ENCODE measurements at regions of chr2 and their contacts with region 1.

Region 1: GRCh38 chr2:121649596-121650314 is 493 bp upstream of the CLASP1 start:
- DNase-seq: peak; percentile 96
- H3K4me3 ChIP-seq: peak overlapping the region; percentile 42 to 80 (median 67)
- H3K27ac ChIP-seq: peak overlapping the region; percentile 86
- H3K4me1 ChIP-seq: peaks cover 16% of the 10 kb centered on the region
- H3K27me3 ChIP-seq: no peaks in the 10 kb centered on the region
- CTCF ChIP-seq: no peak

Region 2: GRCh38 chr2:121579309-121579708 is 70.4 kb before region 1 on chr2:
- CTCF ChIA-PET with region 1: no interaction called
- dilution Hi-C with region 1: loop called (anchors 5 kb)
- in situ Hi-C with region 1: no loop called
- intact Hi-C with region 1: no loop called
- DNase-seq: no peak
- H3K4me3 ChIP-seq: no peak overlapping the region
- H3K27ac ChIP-seq: no peak overlapping the region
- H3K4me1 ChIP-seq: no peaks in the 10 kb centered on the region
- H3K27me3 ChIP-seq: no peaks in the 10 kb centered on the region
- CTCF ChIP-seq: no peak

Region 3: DNA sequence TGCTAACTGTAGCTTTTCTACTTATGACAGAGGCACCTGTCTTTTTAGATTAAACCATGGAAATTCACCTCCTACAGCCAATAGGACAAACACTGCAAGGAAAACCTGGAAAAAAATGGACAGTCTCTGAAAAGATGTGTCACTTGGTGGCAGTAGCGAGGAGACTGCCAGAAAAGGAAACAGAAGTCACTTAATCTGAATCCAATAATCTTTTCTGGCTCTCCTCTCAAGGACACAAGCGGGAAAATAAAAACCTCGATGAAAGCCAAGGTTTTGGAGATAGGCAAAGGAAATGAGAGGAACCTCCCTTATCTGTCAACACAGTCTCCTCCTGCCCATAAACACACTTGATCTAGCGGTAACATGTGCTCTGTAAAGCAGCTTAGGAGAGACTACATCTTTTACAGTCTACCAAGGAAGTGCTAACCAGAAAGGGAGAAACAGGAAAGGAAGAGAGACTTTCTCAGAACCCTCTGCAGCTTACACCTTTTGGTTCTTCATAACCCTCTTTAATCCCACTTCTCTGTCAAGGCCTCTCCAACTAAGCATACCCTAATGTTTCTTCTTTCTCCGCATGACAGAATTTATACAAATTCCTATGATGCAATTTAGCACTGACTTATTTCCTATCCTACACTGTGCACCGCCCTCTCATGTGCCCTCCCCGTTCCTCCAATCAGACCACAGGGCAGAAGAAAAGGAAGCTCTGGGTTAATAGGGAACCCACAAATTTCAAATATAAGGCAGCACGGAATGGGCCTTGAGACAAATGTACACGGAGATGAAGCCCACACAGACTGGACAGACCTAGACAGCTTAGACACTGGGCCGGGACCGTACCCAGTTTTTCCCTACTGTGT is 53.3 kb before region 1 on chr2:
- CTCF ChIA-PET with region 1: no interaction called
- dilution Hi-C with region 1: no loop called
- in situ Hi-C with region 1: no loop called
- intact Hi-C with region 1: loop called (anchors 1 kb)
- DNase-seq: peak; percentile 36
- H3K4me3 ChIP-seq: no peak overlapping the region
- H3K27ac ChIP-seq: no peak overlapping the region
- H3K4me1 ChIP-seq: peaks cover 18% of the 10 kb centered on the region
- H3K27me3 ChIP-seq: no peaks in the 10 kb centered on the region
- CTCF ChIP-seq: peak; percentile 17 to 66

Region 4: GRCh38 chr2:121664086-121664485 is 14.3 kb after region 1 on chr2:
- CTCF ChIA-PET with region 1: no interaction called
- dilution Hi-C with region 1: no loop called
- in situ Hi-C with region 1: no loop called
- intact Hi-C with region 1: loop called (anchors 1 kb)
- DNase-seq: peak; percentile 40
- H3K4me3 ChIP-seq: no peak overlapping the region
- H3K27ac ChIP-seq: no peak overlapping the region
- H3K4me1 ChIP-seq: peaks cover 33% of the 10 kb centered on the region
- H3K27me3 ChIP-seq: no peaks in the 10 kb centered on the region
- CTCF ChIP-seq: no peak

Region 5: DNA sequence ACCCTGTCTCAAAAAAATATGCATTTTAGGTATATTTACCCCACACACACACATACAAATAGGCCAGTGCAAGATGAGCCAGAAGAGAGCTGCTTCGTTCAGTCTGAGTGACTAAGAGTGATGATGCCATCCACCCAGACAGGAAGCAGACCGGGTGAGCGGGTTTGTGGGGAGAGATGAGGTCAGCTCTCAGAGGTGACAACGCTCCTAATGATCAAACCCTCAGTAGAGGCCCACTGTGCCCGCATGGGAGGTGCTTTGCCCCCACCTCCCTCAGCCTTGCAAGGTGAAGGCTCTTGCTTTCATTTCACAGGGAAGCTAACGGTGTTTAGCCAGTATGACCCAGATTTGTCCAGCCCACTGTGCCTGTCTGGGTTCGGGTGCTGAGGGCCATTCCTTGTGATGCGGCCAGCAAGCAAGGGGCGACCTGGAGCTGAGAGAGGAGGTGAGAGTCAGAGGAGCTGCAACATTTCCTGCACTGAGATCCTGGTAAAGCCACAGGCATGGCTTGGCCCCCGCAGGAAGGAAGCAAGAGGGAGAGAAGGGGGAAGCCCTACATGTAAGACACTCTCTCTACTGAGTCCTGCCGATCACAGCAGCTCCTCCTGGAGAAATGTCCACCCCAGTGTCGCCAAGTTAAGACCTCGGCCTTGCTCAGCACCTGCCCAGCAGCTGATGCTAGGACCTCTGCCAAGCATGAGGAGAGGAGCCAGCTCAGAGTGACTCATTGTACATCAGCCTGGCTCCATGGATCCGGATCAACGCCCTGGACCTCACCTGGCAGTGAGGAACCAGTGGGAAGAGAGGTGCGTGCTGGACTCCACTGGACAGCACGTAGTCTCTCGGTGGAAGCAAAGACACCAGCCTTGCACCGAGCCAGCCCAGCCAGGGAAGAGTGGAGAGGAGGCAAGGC is 49.9 kb after region 1 on chr2:
- CTCF ChIA-PET with region 1: no interaction called
- dilution Hi-C with region 1: no loop called
- in situ Hi-C with region 1: no loop called
- intact Hi-C with region 1: loop called (anchors 1 kb)
- DNase-seq: peak; percentile 94
- H3K4me3 ChIP-seq: no peak overlapping the region
- H3K27ac ChIP-seq: peak overlapping the region; percentile 87
- H3K4me1 ChIP-seq: peaks cover 57% of the 10 kb centered on the region
- H3K27me3 ChIP-seq: no peaks in the 10 kb centered on the region
- CTCF ChIP-seq: no peak

Region 6: DNA sequence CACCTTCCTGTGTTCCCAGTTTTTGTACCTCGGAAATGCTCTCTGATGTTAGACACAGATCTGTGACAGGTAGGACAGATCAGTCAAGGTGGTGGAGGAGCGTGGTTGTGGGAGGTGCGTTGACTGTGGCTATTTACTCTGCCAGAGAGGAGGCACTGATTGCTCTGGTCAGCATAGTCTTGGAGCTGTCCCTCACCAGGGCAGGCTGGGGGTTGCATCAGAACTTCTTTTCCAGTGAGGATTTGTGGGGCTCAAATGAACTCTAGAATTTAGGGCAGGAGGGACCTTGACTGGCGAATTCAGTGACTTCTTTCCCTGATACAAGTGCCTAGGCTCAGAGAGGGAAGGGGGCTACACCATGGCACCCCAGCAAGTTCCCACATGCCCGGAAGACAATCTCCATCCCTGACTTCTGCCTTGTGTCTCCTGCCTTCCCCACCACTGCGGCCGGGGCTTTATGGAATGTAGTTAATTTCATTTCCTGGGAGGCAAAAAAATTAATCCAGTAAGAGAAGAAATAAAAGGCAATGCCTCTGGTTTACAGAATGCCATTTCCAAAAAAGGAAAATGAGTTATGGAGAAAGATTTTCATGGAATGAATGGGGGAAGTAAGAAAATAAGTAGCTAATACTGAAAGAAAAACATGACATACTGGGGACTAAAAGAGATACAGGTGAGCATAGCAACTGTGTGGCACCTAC is 60.9 kb after region 1 on chr2:
- CTCF ChIA-PET with region 1: no interaction called
- dilution Hi-C with region 1: no loop called
- in situ Hi-C with region 1: no loop called
- intact Hi-C with region 1: loop called (anchors 2 kb)
- DNase-seq: peak; percentile 41
- H3K4me3 ChIP-seq: no peak overlapping the region
- H3K27ac ChIP-seq: no peak overlapping the region
- H3K4me1 ChIP-seq: peaks cover 30% of the 10 kb centered on the region
- H3K27me3 ChIP-seq: no peaks in the 10 kb centered on the region
- CTCF ChIP-seq: no peak

Region 7: DNA sequence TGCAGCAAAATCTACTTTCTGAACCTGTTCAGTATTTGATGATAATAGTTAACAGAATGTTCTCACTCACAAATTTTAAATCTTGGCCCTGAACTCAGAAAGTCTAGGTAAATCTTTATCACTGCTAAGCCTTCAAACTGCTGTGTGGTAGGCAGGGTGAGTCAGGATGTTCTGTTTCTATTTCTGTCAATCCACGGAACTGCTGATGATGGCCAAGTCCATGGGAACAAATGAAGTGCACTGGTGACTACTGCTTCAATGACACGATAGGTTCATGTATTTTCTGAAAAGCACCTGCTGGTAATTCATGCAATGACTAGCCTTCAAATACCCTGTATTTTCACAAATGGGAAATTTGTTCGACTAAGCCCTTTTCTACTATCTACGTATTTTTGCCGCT is 72.7 kb after region 1 on chr2:
- CTCF ChIA-PET with region 1: no interaction called
- dilution Hi-C with region 1: loop called (anchors 5 kb)
- in situ Hi-C with region 1: no loop called
- intact Hi-C with region 1: loop called (anchors 1 kb)
- DNase-seq: peak; percentile 82
- H3K4me3 ChIP-seq: no peak overlapping the region
- H3K27ac ChIP-seq: peak overlapping the region; percentile 80
- H3K4me1 ChIP-seq: peaks cover 12% of the 10 kb centered on the region
- H3K27me3 ChIP-seq: no peaks in the 10 kb centered on the region
- CTCF ChIP-seq: no peak